Naive thymus-derived CD4-positive, alpha-beta T cell (primary cell): ENCODE measurements at regions of chr2 and their contacts with region 1.

Region 1: DNA sequence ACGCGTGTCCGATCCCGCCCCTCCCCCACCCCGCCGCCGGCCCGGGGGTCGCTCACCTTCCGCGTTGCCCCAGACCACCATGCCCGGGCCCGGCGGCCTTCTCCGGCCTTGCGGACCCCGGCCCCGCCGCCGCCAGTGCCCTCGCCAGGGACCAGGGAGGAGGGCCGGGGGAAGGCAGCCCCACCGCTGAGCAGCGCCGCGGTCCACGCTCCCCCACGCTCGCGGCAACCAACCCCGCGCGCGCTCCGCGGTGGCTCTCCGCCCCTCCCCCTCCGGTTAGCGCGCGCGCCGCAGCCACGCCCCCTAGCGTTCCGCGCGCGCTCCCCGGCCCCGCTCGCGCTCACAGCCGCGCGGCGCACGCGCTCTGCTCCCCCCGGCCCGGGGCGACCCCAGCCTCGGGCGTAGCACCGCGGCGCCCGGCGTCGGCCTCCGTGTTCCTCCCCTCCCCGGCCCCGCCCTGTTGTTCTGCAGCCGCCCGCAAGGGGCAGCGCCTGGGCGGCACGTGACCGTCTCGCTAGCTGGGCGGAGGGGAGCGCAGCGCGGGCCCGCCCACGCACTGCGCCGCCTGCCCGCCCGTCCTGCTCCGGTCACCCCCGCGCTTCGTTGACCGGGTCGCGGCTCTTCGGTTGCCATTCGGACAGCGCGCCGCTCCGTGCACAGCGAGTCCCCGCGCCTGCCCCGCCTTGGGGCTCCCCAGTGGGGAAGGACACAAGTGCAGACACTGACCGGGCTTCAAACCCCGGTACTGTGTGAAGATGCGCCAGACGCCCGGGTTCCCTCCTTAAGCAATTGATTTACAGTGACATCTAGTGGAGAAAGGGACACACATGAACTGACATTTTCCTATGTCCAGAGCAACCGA is at the start of gene REV1:
- DNase-seq: peak; percentile 92 to 99 (median 96)
- ATAC-seq: peak; percentile 92
- H3K4me3 ChIP-seq: peak within 1 kb of the TSS; percentile 96
- H3K4me3 Mint-ChIP-seq: peak within 1 kb of the TSS; percentile 93 to 100 (median 97)
- H3K27ac ChIP-seq: peak within 1 kb of the TSS; percentile 83
- H3K27ac Mint-ChIP-seq: peak within 1 kb of the TSS; percentile 96 to 100 (median 99)
- H3K4me1 ChIP-seq: peaks cover 0 to 14% of the 10 kb centered on the region in 2 donors
- H3K4me1 Mint-ChIP-seq: peaks cover 27 to 45% (median 39%) of the 10 kb centered on the region in 7 donors
- H3K27me3 ChIP-seq: no peaks in the 10 kb centered on the region
- H3K27me3 Mint-ChIP-seq: no peaks in the 10 kb centered on the region
- total RNA-seq, gene REV1: 40.9 to 72.5 (median 54.7) TPM

Region 2: GRCh38 chr2:97995734-97996624 is 1494.0 kb before region 1 on chr2 and contains the start of gene TMEM131:
- CTCF ChIA-PET with region 1: no interaction called
- POLR2A ChIA-PET with region 1: no interaction called
- intact Hi-C with region 1: loop called in 1 of 2 experiments (anchors 5 kb)
- DNase-seq: peak; percentile 89 to 98 (median 95)
- ATAC-seq: peak; percentile 93
- H3K4me3 ChIP-seq: peak within 1 kb of the TSS; percentile 90
- H3K4me3 Mint-ChIP-seq: peak within 1 kb of the TSS; percentile 85 to 98 (median 96)
- H3K27ac ChIP-seq: peak within 1 kb of the TSS; percentile 96
- H3K27ac Mint-ChIP-seq: peak within 1 kb of the TSS; percentile 86 to 95 (median 93)
- H3K4me1 ChIP-seq: peaks cover 14 to 17% of the 10 kb centered on the region in 2 donors
- H3K4me1 Mint-ChIP-seq: peaks cover 20 to 40% (median 38%) of the 10 kb centered on the region in 7 donors
- H3K27me3 ChIP-seq: no peaks in the 10 kb centered on the region
- H3K27me3 Mint-ChIP-seq: peaks cover 0 to 4% (median 0%) of the 10 kb centered on the region in 5 donors
- total RNA-seq, gene TMEM131: 39.7 to 46.4 (median 43.6) TPM

Region 3: DNA sequence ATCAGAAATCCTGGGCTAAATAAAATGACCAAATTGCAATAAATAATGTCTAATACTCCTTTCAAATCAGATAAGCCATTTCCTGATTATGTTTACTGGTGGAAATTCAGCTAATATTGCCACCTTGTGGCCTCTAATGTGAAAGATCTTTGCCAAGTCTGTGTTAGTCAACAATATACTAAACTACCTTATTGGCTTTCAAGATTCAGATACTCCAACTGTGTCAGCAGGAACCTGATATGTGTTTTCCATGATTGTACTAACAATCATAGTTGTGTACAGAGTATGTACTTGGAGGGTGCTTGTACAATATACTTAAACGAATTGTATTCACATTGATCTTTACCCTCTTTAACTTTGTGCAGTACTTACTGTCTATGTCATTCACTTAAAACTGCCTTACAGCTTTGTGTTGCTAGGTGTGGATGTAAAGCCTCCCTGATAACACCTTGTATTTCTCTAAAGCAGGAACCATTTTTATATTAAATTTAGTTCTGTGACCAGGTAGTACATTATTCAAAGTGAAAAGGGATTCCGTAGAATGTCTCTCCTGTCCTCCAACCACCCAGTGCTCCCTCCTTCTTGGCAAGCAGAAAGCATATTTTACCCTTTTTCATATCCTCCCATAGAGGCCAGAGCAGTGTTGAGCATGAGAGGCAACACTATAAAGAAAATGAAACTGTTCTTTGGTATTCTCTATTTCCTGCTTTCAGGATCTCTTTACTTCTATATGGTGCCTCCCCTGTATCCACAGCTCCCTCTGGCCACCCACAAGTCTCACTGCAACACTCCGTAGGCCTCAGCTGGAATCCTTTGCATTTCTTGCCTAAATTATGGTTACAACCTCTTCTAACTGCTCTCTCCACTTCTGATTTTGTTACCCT is 423.7 kb before region 1 on chr2:
- CTCF ChIA-PET with region 1: no interaction called
- POLR2A ChIA-PET with region 1: no interaction called
- intact Hi-C with region 1: loop called in 1 of 2 experiments (anchors 2 kb)
- DNase-seq: peak in 7 of 9 donors; percentile 22 to 54 (median 40)
- ATAC-seq: peak; percentile 93
- H3K4me3 ChIP-seq: no peak overlapping the region
- H3K4me3 Mint-ChIP-seq: no peak overlapping the region
- H3K27ac ChIP-seq: peak overlapping the region; percentile 52
- H3K27ac Mint-ChIP-seq: no peak overlapping the region
- H3K4me1 ChIP-seq: peaks cover 8 to 23% of the 10 kb centered on the region in 2 donors
- H3K4me1 Mint-ChIP-seq: peaks cover 0 to 6% (median 0%) of the 10 kb centered on the region in 7 donors
- H3K27me3 ChIP-seq: no peaks in the 10 kb centered on the region
- H3K27me3 Mint-ChIP-seq: peaks cover 0 to 3% (median 0%) of the 10 kb centered on the region in 5 donors

Region 4: GRCh38 chr2:99141110-99142108 is 348.6 kb before region 1 on chr2 and contains the start of gene C2orf15:
- CTCF ChIA-PET with region 1: no interaction called
- POLR2A ChIA-PET with region 1: interaction called, 5 read pairs
- intact Hi-C with region 1: loop called in 1 of 2 experiments (anchors 1 kb)
- DNase-seq: peak; percentile 89 to 98 (median 96)
- ATAC-seq: peak; percentile 95
- H3K4me3 ChIP-seq: peak within 1 kb of the TSS; percentile 97
- H3K4me3 Mint-ChIP-seq: peak within 1 kb of the TSS; percentile 90 to 99 (median 97)
- H3K27ac ChIP-seq: peak within 1 kb of the TSS; percentile 82
- H3K27ac Mint-ChIP-seq: peak within 1 kb of the TSS; percentile 92 to 99 (median 98)
- H3K4me1 ChIP-seq: peaks cover 13% of the 10 kb centered on the region in 2 donors
- H3K4me1 Mint-ChIP-seq: peaks cover 0 to 31% (median 25%) of the 10 kb centered on the region in 7 donors
- H3K27me3 ChIP-seq: no peaks in the 10 kb centered on the region
- H3K27me3 Mint-ChIP-seq: peaks cover 0 to 41% (median 0%) of the 10 kb centered on the region in 5 donors
- total RNA-seq, gene C2orf15: 0.48 to 3.8 (median 3.1) TPM

Region 5: DNA sequence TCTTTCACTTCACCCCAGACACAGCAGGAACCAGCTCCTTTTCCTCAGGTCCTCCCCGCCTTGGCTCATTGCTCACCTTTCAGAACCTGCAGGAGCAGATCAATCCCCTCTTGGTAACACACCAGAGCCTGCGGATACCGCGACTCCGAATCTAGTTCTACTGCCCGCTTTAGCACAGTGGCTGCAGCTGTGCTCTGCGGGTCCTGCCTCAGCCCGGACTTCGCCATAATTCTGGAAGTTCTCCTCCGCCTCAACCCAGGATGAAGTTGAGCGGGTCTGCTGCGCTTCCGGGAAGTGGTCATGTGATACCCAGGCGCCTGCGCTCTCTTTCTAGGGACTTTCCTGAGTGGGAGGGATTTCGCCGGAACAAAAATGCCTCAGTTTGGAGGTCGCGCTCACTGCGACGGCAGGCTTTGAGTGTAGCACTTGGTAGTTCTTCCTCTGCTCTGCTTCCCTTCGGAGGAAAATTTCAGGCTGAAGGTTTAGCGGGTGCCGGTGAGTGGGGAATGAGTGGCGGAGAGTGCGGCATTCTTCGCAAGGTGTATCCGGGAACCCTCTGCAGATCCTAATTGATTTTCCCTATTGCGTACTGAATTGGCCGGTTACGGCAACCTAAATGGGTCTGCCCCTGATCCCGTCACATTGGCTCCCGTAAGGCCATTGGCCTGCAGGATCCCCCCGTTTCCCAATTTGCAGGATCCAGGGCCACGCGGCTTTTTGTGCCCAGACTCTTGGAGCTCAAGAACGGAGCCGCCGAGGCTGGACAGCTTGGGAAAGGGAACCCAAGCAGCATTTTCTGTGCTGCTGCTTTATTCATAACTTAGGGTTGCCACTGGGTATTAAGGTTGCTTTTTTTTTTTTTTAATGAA is 309.0 kb before region 1 on chr2 and contains the starts of genes MITD1 and MRPL30:
- CTCF ChIA-PET with region 1: no interaction called
- POLR2A ChIA-PET with region 1: interaction called, 3 read pairs
- intact Hi-C with region 1: loop called (anchors 1 kb)
- DNase-seq: peak; percentile 72 to 94 (median 90)
- ATAC-seq: peak; percentile 97
- H3K4me3 ChIP-seq: peak within 1 kb of the TSS; percentile 97
- H3K4me3 Mint-ChIP-seq: peak within 1 kb of the TSS; percentile 94 to 100 (median 99)
- H3K27ac ChIP-seq: peak within 1 kb of the TSS; percentile 89
- H3K27ac Mint-ChIP-seq: peak within 1 kb of the TSS; percentile 93 to 99 (median 99)
- H3K4me1 ChIP-seq: peaks cover 30 to 32% of the 10 kb centered on the region in 2 donors
- H3K4me1 Mint-ChIP-seq: peaks cover 41 to 85% (median 74%) of the 10 kb centered on the region in 7 donors
- H3K27me3 ChIP-seq: no peaks in the 10 kb centered on the region
- H3K27me3 Mint-ChIP-seq: no peaks in the 10 kb centered on the region
- total RNA-seq, gene MITD1: 26.8 to 80.5 (median 73.8) TPM
- total RNA-seq, gene MRPL30: 16.1 to 26.0 (median 21.9) TPM

Region 6: DNA sequence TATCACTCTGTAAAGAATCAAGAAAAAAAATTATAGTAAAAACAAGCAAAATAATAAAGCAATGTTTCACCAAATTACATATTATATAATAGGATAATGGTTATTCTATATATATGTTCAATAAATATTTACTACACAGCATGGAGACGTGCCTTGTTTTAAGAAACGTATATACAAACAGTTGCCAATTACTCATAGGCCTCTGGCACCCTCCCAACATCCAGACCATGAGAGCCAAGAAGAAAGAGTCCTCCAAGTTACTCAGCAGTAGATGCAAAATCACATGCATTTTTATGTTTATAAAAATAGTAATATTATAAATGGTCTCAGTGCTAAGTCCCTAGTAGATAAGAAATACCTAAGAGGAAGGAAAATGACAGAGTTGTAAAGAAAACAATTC is 65.0 kb before region 1 on chr2:
- CTCF ChIA-PET with region 1: no interaction called
- POLR2A ChIA-PET with region 1: no interaction called
- intact Hi-C with region 1: loop called in 1 of 2 experiments (anchors 10 kb)
- DNase-seq: no peak
- ATAC-seq: no peak
- H3K4me3 ChIP-seq: no peak overlapping the region
- H3K4me3 Mint-ChIP-seq: no peak overlapping the region
- H3K27ac ChIP-seq: no peak overlapping the region
- H3K27ac Mint-ChIP-seq: no peak overlapping the region
- H3K4me1 ChIP-seq: no peaks in the 10 kb centered on the region
- H3K4me1 Mint-ChIP-seq: no peaks in the 10 kb centered on the region
- H3K27me3 ChIP-seq: no peaks in the 10 kb centered on the region
- H3K27me3 Mint-ChIP-seq: no peaks in the 10 kb centered on the region

Region 7: DNA sequence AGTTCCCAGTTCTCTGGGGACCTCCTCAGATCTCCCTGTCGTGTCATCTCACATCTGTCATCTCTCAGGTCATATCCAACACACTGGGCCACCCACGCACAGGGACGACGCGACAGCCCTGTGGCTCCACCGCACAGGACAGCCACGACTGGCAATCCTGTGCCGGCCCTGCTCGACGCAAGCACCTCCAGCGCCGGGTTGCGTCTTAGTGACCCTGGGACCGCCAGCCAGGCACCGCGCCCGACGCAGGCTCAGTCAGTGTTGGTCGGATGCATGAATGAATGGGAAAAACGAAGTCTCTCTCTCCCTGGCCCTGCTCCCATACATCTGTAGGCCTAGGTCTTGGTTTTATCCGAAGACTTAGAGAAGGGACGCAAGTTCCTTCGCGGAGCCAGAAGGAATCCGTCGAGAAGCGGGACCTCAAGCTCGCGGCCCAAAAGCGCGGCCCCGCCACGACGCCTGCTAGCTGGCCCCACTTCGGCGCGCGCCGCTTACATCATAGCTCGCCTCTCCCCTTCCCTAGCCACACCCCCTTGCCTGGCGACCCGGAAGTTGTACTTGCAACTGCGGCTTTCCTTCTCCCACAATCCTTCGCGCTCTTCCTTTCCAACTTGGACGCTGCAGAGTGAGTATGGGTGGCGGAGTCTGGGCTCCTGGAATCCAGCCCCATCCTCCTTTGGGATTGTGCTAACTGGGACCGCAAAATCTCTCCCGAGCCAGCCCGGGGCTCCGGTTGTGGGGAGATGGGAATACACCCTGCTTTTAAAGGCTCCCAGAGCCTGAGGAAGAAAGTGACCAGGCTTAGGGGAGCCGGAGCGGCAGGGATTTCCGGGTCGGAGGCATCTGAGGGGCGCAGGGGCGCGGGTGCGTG is 1511.9 kb after region 1 on chr2 and contains the start of gene RPL31:
- CTCF ChIA-PET with region 1: no interaction called
- POLR2A ChIA-PET with region 1: no interaction called
- intact Hi-C with region 1: loop called in 1 of 2 experiments (anchors 5 kb)
- DNase-seq: peak; percentile 86 to 97 (median 95)
- ATAC-seq: peak; percentile 99
- H3K4me3 ChIP-seq: peak within 1 kb of the TSS; percentile 93
- H3K4me3 Mint-ChIP-seq: peak within 1 kb of the TSS; percentile 91 to 99 (median 95)
- H3K27ac ChIP-seq: peak within 1 kb of the TSS; percentile 86
- H3K27ac Mint-ChIP-seq: peak within 1 kb of the TSS; percentile 88 to 99 (median 98)
- H3K4me1 ChIP-seq: peaks cover 16 to 18% of the 10 kb centered on the region in 2 donors
- H3K4me1 Mint-ChIP-seq: peaks cover 32 to 48% (median 44%) of the 10 kb centered on the region in 7 donors
- H3K27me3 ChIP-seq: no peaks in the 10 kb centered on the region
- H3K27me3 Mint-ChIP-seq: peaks cover 0 to 5% (median 0%) of the 10 kb centered on the region in 5 donors
- total RNA-seq, gene RPL31: 1,182 to 2,835 (median 2,548) TPM